ENCODE measurements at regions of chr1 and their contacts with region 1.

Region 1: DNA sequence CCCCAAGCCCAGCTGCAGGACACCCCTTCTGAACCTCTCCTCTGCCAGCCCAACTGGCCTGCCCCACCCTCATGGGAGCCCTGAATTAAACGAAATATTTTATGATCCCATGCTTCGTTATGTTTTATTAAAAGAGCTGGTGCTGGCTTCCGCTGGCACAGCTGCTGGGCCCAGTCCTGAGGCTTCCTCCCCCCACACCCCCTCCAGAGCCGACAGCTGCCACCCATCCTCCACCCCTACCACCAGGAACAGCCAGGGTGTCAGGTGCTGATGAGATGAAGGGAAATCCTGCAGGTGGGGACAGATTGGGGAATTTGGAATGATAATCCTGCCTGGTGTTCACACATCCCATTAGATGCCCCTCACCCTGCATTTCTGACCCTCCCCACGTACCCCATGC is 19.0 kb downstream of the IGSF21 start:
- DNase-seq: no peak

Region 2: GRCh38 chr1:17696417-17697301 is 430.0 kb before region 1 on chr1:
- intact Hi-C with region 1: loop called in 1 of 2 experiments (anchors 10 kb)
- DNase-seq: no peak

Region 3: DNA sequence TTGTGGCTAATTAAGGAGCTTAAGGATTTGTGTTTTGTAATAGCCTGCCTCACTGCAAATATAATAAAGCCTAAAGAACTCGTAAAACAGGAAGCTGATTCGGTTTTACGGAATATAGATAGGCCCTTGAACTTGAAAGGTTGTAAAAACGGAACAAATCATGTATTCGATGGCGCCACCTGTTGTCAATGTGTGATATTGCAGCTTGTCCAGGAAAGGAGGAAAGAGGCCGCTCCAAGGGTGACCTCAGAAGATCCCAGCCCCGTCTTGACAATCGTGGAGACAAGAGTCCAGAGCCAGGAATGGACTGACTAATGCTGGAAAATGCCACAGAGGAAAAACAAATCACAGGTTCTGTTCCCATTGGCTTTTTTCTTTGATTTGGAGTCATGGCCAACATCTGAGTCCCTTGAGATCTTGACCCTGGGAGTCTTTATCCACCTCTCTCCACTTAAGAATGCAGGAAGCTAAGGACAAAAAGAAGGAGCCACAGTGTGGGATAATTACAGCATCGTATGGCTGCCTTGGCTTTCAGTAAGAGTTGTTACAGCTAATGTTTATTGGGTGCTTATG is 26.0 kb before region 1 on chr1:
- intact Hi-C with region 1: loop called in 1 of 2 experiments (anchors 1 kb)
- DNase-seq: peak; percentile 89

Measured in posterior vena cava (tissue), 2 donors.